Activated T-helper 1 cell treated with anti-CD3 and anti-CD28 coated beads, Interleukin-12 subunit alpha, Interleukin-12 subunit beta, Interleukin-2, Interleukin-4 antibody, amounts not matched to agents 30 ng/mL and 10 ng/mL and 1 ng/mL, durations not matched to agents 14 hours and 24 hours and 36 hours (primary cell): ENCODE measurements at regions of chr6 and their contacts with region 1.

Region 1: GRCh38 chr6:15522427-15522826 is 140.4 kb downstream of the DTNBP1 start:
- DNase-seq: no peak
- H3K4me3 Mint-ChIP-seq: no peak overlapping the region
- H3K27ac Mint-ChIP-seq: peak overlapping the region; percentile 65
- H3K4me1 Mint-ChIP-seq: peaks cover 26% of the 10 kb centered on the region
- H3K27me3 Mint-ChIP-seq: no peaks in the 10 kb centered on the region

Region 2: GRCh38 chr6:15207923-15208322 is 314.5 kb before region 1 on chr6:
- intact Hi-C with region 1: no loop called
- DNase-seq: no peak
- H3K4me3 Mint-ChIP-seq: no peak overlapping the region
- H3K27ac Mint-ChIP-seq: no peak overlapping the region
- H3K4me1 Mint-ChIP-seq: no peaks in the 10 kb centered on the region
- H3K27me3 Mint-ChIP-seq: no peaks in the 10 kb centered on the region

Region 3: GRCh38 chr6:16206595-16207037 is 684.2 kb after region 1 on chr6:
- intact Hi-C with region 1: loop called (anchors 10 kb)
- DNase-seq: peak; percentile 22
- H3K4me3 Mint-ChIP-seq: no peak overlapping the region
- H3K27ac Mint-ChIP-seq: no peak overlapping the region
- H3K4me1 Mint-ChIP-seq: peaks cover 6% of the 10 kb centered on the region
- H3K27me3 Mint-ChIP-seq: peaks cover 27% of the 10 kb centered on the region